Left ventricle myocardium superior (tissue), 1 donor: ENCODE measurements at regions of chr20 and their contacts with region 1.

Region 1: GRCh38 chr20:16758454-16759180 is 10.5 kb downstream of the OTOR start:
- DNase-seq: no peak
- ATAC-seq: no peak

Region 2: GRCh38 chr20:16517946-16518783 is 240.5 kb before region 1 on chr20:
- intact Hi-C with region 1: loop called (anchors 10 kb)
- DNase-seq: no peak
- ATAC-seq: peak; percentile 68

Region 3: GRCh38 chr20:16589625-16590024 is 169.0 kb before region 1 on chr20:
- intact Hi-C with region 1: no loop called
- DNase-seq: no peak
- ATAC-seq: no peak

Region 4: DNA sequence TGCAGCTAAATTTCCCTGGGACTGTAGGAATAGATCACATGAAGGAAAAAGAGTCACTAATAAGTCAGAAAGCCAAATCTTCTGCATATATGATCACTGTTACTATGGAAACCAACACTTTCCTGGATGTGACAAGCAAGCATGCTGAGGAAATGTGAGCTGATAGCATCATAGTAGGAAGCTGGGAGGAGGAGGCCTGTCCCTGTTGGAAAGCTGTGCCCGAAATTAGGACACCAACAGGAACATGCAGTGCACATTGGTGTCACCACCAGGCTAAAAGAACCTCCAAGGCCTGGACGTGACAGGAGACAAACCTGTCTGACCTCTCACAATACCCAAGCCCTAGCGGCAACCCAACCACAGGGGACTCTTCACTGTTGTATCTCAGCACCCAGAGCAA is 286.3 kb after region 1 on chr20:
- intact Hi-C with region 1: no loop called
- DNase-seq: no peak
- ATAC-seq: no peak

Region 5: GRCh38 chr20:17140894-17141293 is 382.3 kb after region 1 on chr20:
- intact Hi-C with region 1: no loop called
- DNase-seq: no peak
- ATAC-seq: no peak